ENCODE measurements at regions of chr20 and their contacts with region 1.

Region 1: DNA sequence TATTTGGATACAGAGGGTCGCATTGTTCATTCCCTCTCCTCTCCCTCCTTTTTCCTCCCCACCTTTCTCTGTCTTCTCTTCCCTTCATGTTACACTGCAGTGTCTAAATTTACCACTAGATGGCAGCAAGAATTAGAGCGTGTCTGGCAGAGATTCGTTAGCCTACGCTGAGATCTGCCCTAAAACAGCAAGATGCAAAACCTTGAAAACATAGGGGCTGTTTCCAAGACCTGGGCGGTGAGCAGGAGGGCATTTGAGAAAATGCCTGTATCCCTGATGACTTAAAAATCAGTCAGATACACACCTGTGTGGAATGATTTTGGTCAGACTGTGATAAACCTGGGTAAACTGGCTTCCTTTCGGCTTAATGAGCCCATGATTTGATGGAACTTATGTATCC is 101.5 kb upstream of the ISM1 start:
- DNase-seq: peak; percentile 47
- ATAC-seq: peak; percentile 85
- H3K4me3 ChIP-seq: no peak overlapping the region
- H3K27ac ChIP-seq: no peak overlapping the region
- H3K4me1 ChIP-seq: no peaks in the 10 kb centered on the region
- H3K27me3 ChIP-seq: peaks cover 7% of the 10 kb centered on the region
- CTCF ChIP-seq: peak; percentile 88

Region 2: DNA sequence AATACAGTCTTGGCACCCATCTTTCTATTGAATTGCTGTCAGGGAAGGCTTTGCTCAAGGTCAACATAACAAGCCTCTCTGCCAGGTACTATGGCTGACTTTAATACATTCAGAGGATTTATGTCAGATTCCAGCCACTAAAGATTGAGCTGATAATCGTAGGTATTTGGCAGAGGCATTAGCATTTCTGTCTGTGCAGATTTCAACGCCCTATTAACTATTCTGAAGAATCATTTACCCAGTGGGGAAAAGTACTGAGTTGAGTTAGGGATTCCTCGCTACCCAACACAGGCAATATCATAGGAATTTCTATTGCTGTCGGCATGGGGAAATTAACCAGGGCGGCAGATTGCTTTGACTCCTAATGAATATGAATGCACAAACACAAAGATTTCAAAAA is 344.5 kb before region 1 on chr20:
- CTCF ChIA-PET with region 1: no interaction called
- POLR2A ChIA-PET with region 1: no interaction called
- in situ Hi-C with region 1: no loop called
- intact Hi-C with region 1: no loop called
- DNase-seq: no peak
- ATAC-seq: no peak
- H3K4me3 ChIP-seq: no peak overlapping the region
- H3K27ac ChIP-seq: no peak overlapping the region
- H3K4me1 ChIP-seq: no peaks in the 10 kb centered on the region
- H3K27me3 ChIP-seq: no peaks in the 10 kb centered on the region
- CTCF ChIP-seq: no peak

Region 3: DNA sequence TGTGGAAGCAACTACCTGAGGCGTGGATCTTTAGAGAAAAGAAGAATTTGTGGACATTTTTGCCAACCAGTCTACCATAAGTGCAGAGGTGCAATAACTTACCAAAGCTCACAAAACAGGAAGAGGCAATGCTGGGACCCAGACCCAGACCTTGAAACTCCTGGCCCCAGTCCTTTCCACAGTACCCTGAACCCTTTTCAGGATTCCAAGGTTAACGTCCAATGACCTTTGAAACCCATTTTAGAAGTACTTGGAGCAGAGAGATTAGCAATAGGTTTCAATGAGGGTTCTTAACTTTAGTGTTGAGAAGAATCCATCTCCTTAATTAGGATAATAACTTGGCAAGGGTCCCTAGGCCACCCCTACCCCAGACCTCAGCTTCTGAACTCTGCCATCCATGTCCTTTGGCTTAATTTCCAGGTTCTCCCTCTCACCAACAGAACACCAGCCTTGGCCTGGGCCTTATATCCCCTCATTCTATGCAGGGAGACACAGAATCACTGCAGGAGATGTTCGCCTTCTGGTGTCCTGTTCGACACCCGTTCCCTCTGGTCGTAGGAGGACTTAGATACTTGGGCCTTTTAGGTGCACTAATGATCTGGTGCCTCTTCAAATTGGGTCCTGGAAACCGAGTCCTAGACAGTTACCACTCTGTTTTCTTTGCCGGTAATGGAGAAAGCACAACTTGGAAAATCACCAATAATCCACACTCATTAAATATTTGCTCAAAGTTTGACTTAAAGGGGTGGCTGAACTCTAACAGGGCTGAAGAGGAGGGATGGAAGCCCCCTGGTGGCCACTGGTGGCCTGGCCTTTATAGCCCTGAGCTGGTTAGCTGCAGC is 142.1 kb after region 1 on chr20:
- CTCF ChIA-PET with region 1: no interaction called
- POLR2A ChIA-PET with region 1: no interaction called
- in situ Hi-C with region 1: no loop called
- intact Hi-C with region 1: loop called (anchors 10 kb)
- DNase-seq: peak; percentile 22
- ATAC-seq: peak; percentile 75; the same call in 1 of the 2 replicates
- H3K4me3 ChIP-seq: no peak overlapping the region
- H3K27ac ChIP-seq: no peak overlapping the region
- H3K4me1 ChIP-seq: no peaks in the 10 kb centered on the region
- H3K27me3 ChIP-seq: 0 out of 2 replicates have a peak, but pooled peaks cover 2% of the 10 kb centered on the region
- CTCF ChIP-seq: peak; percentile 71

Region 4: GRCh38 chr20:13277663-13278295 is 158.2 kb after region 1 on chr20:
- CTCF ChIA-PET with region 1: no interaction called
- POLR2A ChIA-PET with region 1: interaction called, 10 read pairs
- in situ Hi-C with region 1: no loop called
- intact Hi-C with region 1: no loop called
- DNase-seq: no peak
- ATAC-seq: no peak
- H3K4me3 ChIP-seq: no peak overlapping the region
- H3K27ac ChIP-seq: no peak overlapping the region
- H3K4me1 ChIP-seq: no peaks in the 10 kb centered on the region
- H3K27me3 ChIP-seq: no peaks in the 10 kb centered on the region; the same call in none of the 2 replicates
- CTCF ChIP-seq: no peak

Region 5: DNA sequence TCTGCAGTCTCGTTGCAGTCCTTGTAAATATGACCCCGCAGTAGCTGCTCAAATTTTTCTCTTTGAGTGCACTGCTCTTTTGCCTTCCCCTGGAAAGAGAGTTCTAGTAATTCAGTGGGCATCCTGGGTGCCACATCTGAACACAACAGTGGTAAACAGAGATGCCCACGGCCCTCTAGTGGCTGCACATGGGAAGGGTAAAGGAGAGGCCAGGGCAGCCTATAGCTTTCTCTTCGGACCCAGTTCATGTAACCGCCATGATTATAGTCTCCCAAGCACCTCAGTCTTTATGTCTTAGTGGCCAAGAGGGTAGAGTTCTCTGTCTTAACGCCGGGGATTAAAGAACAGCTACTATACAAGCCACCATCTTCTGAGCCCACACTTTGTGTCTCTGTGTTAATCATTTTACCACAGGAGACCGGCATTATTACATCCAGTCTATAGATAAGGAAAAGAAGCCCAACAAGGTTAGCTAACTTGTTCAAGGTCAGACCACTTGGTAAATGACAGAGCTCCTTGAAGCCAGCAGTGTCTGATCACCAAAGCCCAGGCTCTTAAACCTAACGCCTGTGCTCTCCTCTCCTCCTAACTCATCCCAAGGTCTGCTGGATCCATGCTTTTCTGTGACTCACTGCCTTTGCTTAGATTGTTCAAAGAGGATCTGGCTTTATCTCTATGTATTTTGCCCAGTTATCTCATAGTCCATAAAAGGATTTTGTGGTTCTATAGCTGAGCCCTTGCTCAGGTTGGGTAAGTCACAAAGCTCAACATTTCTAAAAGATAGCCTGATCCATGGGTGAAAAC is 183.3 kb after region 1 on chr20:
- CTCF ChIA-PET with region 1: interaction called, 3 read pairs
- POLR2A ChIA-PET with region 1: no interaction called
- in situ Hi-C with region 1: no loop called
- intact Hi-C with region 1: loop called (anchors 5 kb)
- DNase-seq: no peak
- ATAC-seq: peak; percentile 93
- H3K4me3 ChIP-seq: no peak overlapping the region
- H3K27ac ChIP-seq: no peak overlapping the region
- H3K4me1 ChIP-seq: no peaks in the 10 kb centered on the region
- H3K27me3 ChIP-seq: no peaks in the 10 kb centered on the region
- CTCF ChIP-seq: peak; percentile 84

Region 6: DNA sequence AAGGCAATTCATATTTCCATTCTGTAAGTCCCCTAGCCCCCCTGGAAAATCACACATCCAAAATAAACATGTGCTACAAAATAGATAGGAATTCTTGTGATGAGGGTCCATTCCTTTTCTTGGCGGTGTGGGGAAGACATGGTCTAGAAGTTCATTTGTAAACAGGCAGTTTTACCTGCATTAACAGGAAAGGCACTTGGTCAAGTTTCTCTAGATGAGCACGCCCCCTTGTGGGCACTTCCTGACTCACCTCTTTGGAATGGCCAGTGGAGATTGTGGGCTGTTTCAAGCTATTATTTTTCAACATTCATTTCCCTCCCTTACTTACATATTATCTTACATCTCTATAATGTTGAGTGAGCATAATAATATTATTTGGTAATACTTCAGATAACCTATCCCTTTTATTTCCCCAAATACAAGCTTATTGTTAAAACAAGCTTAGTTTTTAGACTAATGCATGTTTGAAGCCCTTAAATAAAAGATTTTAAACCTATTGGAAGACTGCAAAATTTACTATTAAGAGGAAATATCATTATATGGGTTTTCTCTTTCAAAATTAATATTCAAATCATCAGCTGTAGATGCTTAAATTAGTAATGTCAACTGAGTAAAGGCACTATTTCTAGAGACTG is 427.0 kb after region 1 on chr20:
- CTCF ChIA-PET with region 1: no interaction called
- POLR2A ChIA-PET with region 1: no interaction called
- in situ Hi-C with region 1: no loop called
- intact Hi-C with region 1: loop called (anchors 1 kb)
- DNase-seq: peak; percentile 52
- ATAC-seq: peak; percentile 68; the same call in 1 of the 2 replicates
- H3K4me3 ChIP-seq: no peak overlapping the region
- H3K27ac ChIP-seq: no peak overlapping the region
- H3K4me1 ChIP-seq: no peaks in the 10 kb centered on the region
- H3K27me3 ChIP-seq: no peaks in the 10 kb centered on the region
- CTCF ChIP-seq: peak; percentile 88

Region 7: GRCh38 chr20:13771853-13772453 is 652.4 kb after region 1 on chr20:
- CTCF ChIA-PET with region 1: interaction called, 3 read pairs
- POLR2A ChIA-PET with region 1: no interaction called
- in situ Hi-C with region 1: no loop called
- intact Hi-C with region 1: loop called (anchors 5 kb)
- DNase-seq: no peak
- ATAC-seq: no peak
- H3K4me3 ChIP-seq: no peak overlapping the region
- H3K27ac ChIP-seq: no peak overlapping the region
- H3K4me1 ChIP-seq: no peaks in the 10 kb centered on the region
- H3K27me3 ChIP-seq: no peaks in the 10 kb centered on the region
- CTCF ChIP-seq: peak; percentile 57; the same call in 1 of the 2 replicates